ENCODE measurements at regions of chr19 and their contacts with region 1.

Region 1: GRCh38 chr19:44304659-44305193 is at the start of gene ZNF235:
- DNase-seq: peak; percentile 92 to 96
- ATAC-seq: peak; percentile 100
- H3K4me3 ChIP-seq: peak within 1 kb of the TSS; percentile 92
- H3K27ac ChIP-seq: peak within 1 kb of the TSS; percentile 82
- H3K4me1 ChIP-seq: peaks cover 3% of the 10 kb centered on the region
- H3K27me3 ChIP-seq: no peaks in the 10 kb centered on the region
- CTCF ChIP-seq: no peak
- total RNA-seq, gene ZNF235: 1.4 to 2.6 (median 2.1) TPM

Region 2: DNA sequence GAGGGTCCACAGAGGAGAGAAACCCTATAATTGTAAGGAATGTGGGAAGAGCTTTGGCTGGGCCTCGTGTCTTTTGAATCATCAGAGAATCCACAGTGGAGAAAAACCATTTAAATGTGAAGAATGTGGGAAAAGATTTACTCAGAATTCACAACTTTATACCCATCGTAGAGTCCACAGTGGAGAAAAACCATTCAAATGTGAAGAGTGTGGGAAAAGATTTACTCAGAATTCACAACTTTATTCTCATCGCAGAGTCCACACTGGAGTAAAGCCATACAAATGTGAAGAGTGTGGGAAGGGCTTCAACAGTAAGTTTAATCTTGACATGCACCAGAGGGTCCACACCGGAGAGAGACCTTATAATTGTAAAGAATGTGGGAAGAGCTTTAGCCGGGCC is 172.8 kb before region 1 on chr19:
- intact Hi-C with region 1: no loop called
- DNase-seq: no peak
- ATAC-seq: no peak
- H3K4me3 ChIP-seq: no peak overlapping the region
- H3K27ac ChIP-seq: no peak overlapping the region
- H3K4me1 ChIP-seq: no peaks in the 10 kb centered on the region
- H3K27me3 ChIP-seq: no peaks in the 10 kb centered on the region
- CTCF ChIP-seq: no peak

Region 3: GRCh38 chr19:44212250-44212865 is 92.4 kb before region 1 on chr19 and contains the start of gene ZNF227:
- intact Hi-C with region 1: loop called in 1 of 2 experiments (anchors 5 kb)
- DNase-seq: peak; percentile 92 to 96
- ATAC-seq: peak; percentile 96 to 99 (median 99)
- H3K4me3 ChIP-seq: peak within 1 kb of the TSS; percentile 86
- H3K27ac ChIP-seq: peak within 1 kb of the TSS; percentile 87
- H3K4me1 ChIP-seq: no peaks in the 10 kb centered on the region
- H3K27me3 ChIP-seq: no peaks in the 10 kb centered on the region
- CTCF ChIP-seq: no peak
- total RNA-seq, gene ZNF227: 5.9 to 10.8 (median 10.1) TPM

Region 4: GRCh38 chr19:44260363-44261070 is 44.2 kb before region 1 on chr19:
- intact Hi-C with region 1: no loop called
- DNase-seq: no peak
- ATAC-seq: no peak
- H3K4me3 ChIP-seq: peak overlapping the region; percentile 58
- H3K27ac ChIP-seq: no peak overlapping the region
- H3K4me1 ChIP-seq: no peaks in the 10 kb centered on the region
- H3K27me3 ChIP-seq: no peaks in the 10 kb centered on the region
- CTCF ChIP-seq: no peak

Region 5: DNA sequence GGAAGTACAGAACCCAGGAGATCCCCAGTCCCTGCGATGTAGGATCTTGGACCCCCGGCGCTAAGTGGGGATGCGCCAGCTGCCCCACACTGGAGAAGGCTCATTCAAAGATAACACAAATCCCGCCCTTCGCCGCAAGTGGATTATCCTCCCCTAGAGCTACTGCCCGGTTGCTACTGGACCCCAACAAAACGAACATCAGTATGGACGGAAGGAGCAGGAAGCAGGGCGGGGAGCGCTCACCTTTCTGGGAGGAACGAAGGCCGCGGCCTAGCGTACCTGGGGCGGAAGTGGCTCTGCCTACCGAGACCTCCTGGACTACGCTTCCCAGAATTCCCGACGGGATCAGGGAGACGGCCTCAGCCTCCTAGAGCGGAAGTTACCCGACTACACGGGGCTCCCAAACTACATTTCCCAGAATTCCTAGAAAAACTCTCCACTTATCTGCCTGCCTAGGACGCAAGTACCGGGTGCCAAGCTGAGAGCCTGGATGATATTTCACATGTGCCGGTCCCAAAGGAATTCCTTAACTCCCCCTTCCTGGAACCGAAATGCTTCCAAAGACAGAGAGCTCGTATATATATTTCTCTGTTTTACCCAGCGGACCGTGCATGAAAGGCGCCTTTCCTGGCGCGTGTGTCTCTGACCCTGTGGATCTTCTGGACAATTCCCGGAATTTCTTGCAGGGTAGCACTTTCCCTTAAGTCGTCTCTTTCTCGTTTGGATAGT is 51.8 kb after region 1 on chr19 and contains the start of gene ZNF112:
- intact Hi-C with region 1: loop called (anchors 5 kb)
- DNase-seq: peak; percentile 80 to 91
- ATAC-seq: peak; percentile 98 to 100 (median 100)
- H3K4me3 ChIP-seq: peak within 1 kb of the TSS; percentile 79
- H3K27ac ChIP-seq: peak within 1 kb of the TSS; percentile 55
- H3K4me1 ChIP-seq: peaks cover 5% of the 10 kb centered on the region
- H3K27me3 ChIP-seq: no peaks in the 10 kb centered on the region
- CTCF ChIP-seq: no peak
- total RNA-seq, gene ZNF112: 1.4 to 4.8 (median 1.7) TPM